Gastrocnemius medialis (tissue), 4 donors: ENCODE measurements at regions of chr1 and their contacts with region 1.

Region 1: GRCh38 chr1:175887981-175888433 is 144.6 kb upstream of the TNR start:
- DNase-seq: no peak
- ATAC-seq: peak in 1 of 2 donors; percentile 62
- H3K4me3 ChIP-seq: no peak overlapping the region
- H3K27ac ChIP-seq: no peak overlapping the region
- H3K4me1 ChIP-seq: no peaks in the 10 kb centered on the region
- H3K27me3 ChIP-seq: no peaks in the 10 kb centered on the region
- CTCF ChIP-seq: peak in 4 of 5 experiments; percentile 24 to 65 (median 52)
- POLR2A ChIP-seq: no peak

Region 2: DNA sequence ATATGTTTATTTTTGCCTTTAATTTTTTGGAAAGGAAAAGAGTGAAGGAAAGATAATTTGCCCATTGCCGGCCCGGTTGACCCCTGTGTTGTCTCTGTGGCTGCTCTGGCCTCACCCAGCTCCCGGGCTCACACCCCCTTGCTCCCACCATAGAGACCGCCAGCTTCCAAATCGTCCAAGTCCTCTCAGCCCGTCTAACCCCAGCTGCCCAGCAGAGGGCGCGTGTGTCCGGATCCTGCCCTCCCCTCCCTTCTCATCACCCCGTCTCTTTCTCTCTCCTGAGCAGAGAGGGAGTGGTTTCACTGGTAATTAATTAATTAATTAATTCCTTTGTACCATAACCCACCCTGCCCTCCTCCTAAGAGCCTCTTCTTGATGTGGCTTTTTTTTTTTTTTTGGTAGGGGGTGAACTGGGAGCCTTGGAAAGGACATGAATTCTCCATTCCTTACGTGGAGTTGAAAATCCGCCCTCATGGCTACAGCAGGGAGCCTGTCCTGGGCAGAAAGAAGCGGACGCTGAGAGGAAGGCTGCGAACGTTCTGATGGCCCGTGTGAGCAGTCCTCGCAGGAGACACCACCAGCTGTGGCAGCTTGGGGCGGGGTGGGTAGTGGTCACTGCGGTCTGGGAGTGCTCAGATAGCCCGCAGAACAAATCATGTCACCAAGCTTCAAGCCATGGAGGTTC is 741.3 kb before region 1 on chr1:
- in situ Hi-C with region 1: loop called in 1 of 4 experiments (anchors 25 kb)
- intact Hi-C with region 1: no loop called
- DNase-seq: peak; percentile 19 to 41
- ATAC-seq: peak; percentile 56 to 66
- H3K4me3 ChIP-seq: no peak overlapping the region
- H3K27ac ChIP-seq: no peak overlapping the region
- H3K4me1 ChIP-seq: peaks cover 0 to 6% of the 10 kb centered on the region in 2 donors
- H3K27me3 ChIP-seq: no peaks in the 10 kb centered on the region
- CTCF ChIP-seq: peak; percentile 43 to 80 (median 62)
- POLR2A ChIP-seq: no peak

Region 3: GRCh38 chr1:175481126-175482066 is 406.6 kb before region 1 on chr1:
- in situ Hi-C with region 1: loop called in 1 of 4 experiments (anchors 25 kb)
- intact Hi-C with region 1: loop called (anchors 5 kb)
- DNase-seq: no peak
- ATAC-seq: no peak
- H3K4me3 ChIP-seq: no peak overlapping the region
- H3K27ac ChIP-seq: no peak overlapping the region
- H3K4me1 ChIP-seq: no peaks in the 10 kb centered on the region
- H3K27me3 ChIP-seq: no peaks in the 10 kb centered on the region
- CTCF ChIP-seq: peak in 3 of 5 experiments; percentile 16 to 50 (median 49)
- POLR2A ChIP-seq: no peak

Region 4: DNA sequence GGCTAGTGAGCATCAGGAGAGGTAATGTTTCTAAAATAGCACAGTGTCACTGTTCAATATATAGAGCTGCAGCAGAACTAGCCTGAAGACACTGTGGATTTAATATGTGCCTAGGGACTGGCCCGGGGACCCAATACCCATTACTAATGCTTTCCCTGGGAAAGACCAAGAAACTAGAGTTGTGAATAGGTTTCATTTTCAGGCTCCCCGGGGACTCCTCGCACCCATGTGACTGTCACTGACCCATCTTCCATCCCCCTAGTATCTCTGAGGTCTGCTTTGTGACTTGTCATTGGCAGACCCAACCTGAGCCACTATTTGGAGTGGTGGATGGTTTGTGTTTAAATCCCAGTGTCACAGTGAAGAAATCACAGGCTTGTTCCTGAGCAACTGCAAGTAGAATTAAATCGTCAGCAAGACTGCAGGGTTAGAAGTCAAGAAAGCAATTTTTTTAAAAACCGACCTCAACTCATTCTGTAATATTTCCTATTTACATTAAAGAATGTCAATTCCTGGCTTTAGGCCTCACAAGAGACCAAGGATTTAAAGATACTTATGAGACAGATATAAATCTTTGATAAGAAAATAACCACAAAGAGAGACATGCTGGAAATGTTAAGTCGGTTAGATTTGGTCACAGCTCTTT is 14.6 kb before region 1 on chr1:
- in situ Hi-C with region 1: no loop called
- intact Hi-C with region 1: no loop called
- DNase-seq: no peak
- ATAC-seq: no peak
- H3K4me3 ChIP-seq: no peak overlapping the region
- H3K27ac ChIP-seq: no peak overlapping the region
- H3K4me1 ChIP-seq: no peaks in the 10 kb centered on the region
- H3K27me3 ChIP-seq: no peaks in the 10 kb centered on the region
- CTCF ChIP-seq: no peak
- POLR2A ChIP-seq: no peak

Region 5: GRCh38 chr1:176033881-176034280 is 145.9 kb after region 1 on chr1:
- in situ Hi-C with region 1: no loop called
- intact Hi-C with region 1: no loop called
- DNase-seq: no peak
- ATAC-seq: no peak
- H3K4me3 ChIP-seq: no peak overlapping the region
- H3K27ac ChIP-seq: no peak overlapping the region
- H3K4me1 ChIP-seq: no peaks in the 10 kb centered on the region
- H3K27me3 ChIP-seq: no peaks in the 10 kb centered on the region
- CTCF ChIP-seq: no peak
- POLR2A ChIP-seq: no peak